GM10248 (cell line): ENCODE measurements at regions of chr7 and their contacts with region 1.

Region 1: GRCh38 chr7:128940494-128941322 is 3.0 kb downstream of the IRF5 start:
- DNase-seq: peak; percentile 91
- CTCF ChIP-seq: no peak

Region 2: DNA sequence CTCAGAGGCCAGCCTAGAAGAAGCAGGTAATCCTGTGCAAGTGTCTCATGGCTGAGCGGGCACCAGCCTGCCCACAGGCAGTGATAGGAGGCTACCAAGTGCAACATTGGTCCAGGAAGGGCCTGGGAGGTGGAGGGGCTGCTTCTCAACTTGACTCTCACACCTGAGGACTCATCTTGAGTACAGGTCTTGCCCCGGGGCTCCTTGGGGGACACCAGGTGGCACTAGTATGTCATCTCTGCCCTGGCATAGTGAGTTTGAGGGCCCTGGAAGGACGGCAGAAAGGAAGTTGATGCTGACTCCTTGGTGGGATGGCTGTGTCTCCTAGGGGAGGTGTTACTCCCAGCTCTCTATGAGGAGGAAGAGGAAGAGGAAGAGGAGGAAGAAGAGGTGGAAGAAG is 146.7 kb before region 1 on chr7:
- CTCF ChIA-PET with region 1: no interaction called
- POLR2A ChIA-PET with region 1: no interaction called
- DNase-seq: peak; percentile 37
- CTCF ChIP-seq: peak; percentile 38

Region 3: GRCh38 chr7:128954830-128955802 is 14.4 kb after region 1 on chr7:
- CTCF ChIA-PET with region 1: interaction called, 140 read pairs
- POLR2A ChIA-PET with region 1: interaction called, 14 read pairs
- DNase-seq: peak; percentile 54
- CTCF ChIP-seq: no peak

Region 4: GRCh38 chr7:128963327-128963757 is 22.6 kb after region 1 on chr7:
- CTCF ChIA-PET with region 1: interaction called, 140 read pairs
- POLR2A ChIA-PET with region 1: interaction called, 10 read pairs
- DNase-seq: peak; percentile 77
- CTCF ChIP-seq: no peak